ENCODE measurements at regions of chr2 and their contacts with region 1.

Region 1: DNA sequence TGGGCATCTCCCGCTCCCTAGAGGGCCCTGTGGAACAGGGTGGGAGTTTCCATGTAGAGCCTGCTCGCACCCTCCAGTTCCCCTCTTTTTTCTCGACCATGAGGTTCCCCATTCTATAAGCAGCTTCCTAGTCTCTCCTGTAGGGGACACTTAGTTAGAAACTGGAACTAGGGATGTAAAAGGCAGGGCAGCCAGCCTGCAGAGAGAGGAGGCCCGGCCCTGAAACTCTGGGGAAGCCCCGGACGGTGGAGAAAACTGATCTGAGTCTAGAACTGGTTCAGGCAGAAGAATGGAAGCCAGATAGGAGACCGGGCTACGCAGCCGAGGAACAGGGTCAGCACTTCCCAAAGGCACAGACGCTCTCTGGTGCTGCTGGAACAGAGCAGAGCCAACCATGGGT is 51.6 kb upstream of the ATG16L1 start:
- DNase-seq: no peak
- H3K4me3 Mint-ChIP-seq: no peak overlapping the region
- H3K27ac Mint-ChIP-seq: no peak overlapping the region
- H3K4me1 Mint-ChIP-seq: no peaks in the 10 kb centered on the region
- H3K27me3 Mint-ChIP-seq: no peaks in the 10 kb centered on the region
- CTCF ChIP-seq: no peak

Region 2: GRCh38 chr2:233051241-233052149 is 148.4 kb before region 1 on chr2:
- CTCF ChIA-PET with region 1: no interaction called
- POLR2A ChIA-PET with region 1: no interaction called
- intact Hi-C with region 1: no loop called
- DNase-seq: peak; percentile 98
- H3K4me3 Mint-ChIP-seq: peak overlapping the region; percentile 52
- H3K27ac Mint-ChIP-seq: peak overlapping the region; percentile 94
- H3K4me1 Mint-ChIP-seq: peaks cover 48% of the 10 kb centered on the region
- H3K27me3 Mint-ChIP-seq: no peaks in the 10 kb centered on the region
- CTCF ChIP-seq: no peak

Region 3: DNA sequence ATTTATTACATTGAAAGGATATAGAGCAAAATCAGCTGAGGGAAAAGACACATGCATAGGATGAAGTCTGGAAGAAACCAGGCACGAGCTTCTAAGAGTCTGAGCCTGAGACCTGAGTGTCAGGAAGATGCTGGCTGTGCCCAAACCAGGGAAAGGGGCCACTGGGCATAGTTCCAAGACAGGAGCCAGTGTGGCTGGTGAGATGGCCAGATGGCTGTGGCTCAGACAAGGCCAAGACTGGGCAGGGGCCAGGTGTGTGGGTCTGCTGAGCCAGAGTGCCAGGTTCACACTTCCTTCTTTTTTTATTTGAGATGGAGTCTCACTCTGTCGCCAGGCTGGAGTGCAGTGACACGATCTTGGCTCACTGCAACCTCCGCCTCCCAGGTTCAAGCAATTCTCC is 43.9 kb before region 1 on chr2:
- CTCF ChIA-PET with region 1: no interaction called
- POLR2A ChIA-PET with region 1: no interaction called
- intact Hi-C with region 1: no loop called
- DNase-seq: no peak
- H3K4me3 Mint-ChIP-seq: no peak overlapping the region
- H3K27ac Mint-ChIP-seq: no peak overlapping the region
- H3K4me1 Mint-ChIP-seq: no peaks in the 10 kb centered on the region
- H3K27me3 Mint-ChIP-seq: no peaks in the 10 kb centered on the region
- CTCF ChIP-seq: no peak

Region 4: DNA sequence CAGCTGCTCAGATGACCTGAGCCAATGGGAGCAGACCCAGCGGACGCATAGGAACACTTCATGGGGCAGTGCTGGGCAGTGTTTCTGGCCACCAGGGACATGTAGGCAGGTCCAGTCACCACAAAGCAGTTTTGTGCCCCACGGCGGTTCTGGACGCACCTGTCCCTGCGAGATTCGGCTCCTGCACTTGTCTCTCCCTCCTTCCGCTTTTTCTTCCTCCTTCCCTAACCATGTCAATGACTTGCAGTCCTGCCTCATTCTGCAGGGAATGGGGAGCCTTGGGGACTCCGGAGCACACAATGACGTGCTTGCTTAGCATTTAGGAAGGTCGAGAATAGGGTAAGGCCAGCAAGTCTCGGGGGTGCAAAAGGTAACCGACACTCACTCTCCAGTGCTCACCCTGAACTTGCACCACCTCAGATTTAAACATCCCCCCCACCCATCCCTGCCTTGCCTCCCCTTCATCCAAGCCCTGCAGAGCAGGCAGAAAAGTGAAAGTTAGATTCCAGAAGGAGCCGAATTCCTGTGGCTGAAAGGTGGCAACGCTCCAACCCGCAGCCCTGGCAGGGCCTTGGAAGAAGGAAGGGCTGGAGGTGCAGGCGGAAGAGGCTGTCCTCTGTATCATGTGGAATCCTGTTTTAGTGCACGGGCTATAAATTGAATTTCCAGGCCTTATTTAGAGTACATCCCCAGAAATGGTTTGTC is 11.1 kb after region 1 on chr2:
- CTCF ChIA-PET with region 1: interaction called, 3 read pairs
- POLR2A ChIA-PET with region 1: interaction called, 14 read pairs
- intact Hi-C with region 1: no loop called
- DNase-seq: peak; percentile 93
- H3K4me3 Mint-ChIP-seq: peak overlapping the region; percentile 57
- H3K27ac Mint-ChIP-seq: no peak overlapping the region
- H3K4me1 Mint-ChIP-seq: peaks cover 40% of the 10 kb centered on the region
- H3K27me3 Mint-ChIP-seq: no peaks in the 10 kb centered on the region
- CTCF ChIP-seq: no peak

Region 5: GRCh38 chr2:233443468-233444183 is 243.8 kb after region 1 on chr2:
- CTCF ChIA-PET with region 1: no interaction called
- POLR2A ChIA-PET with region 1: no interaction called
- intact Hi-C with region 1: no loop called
- DNase-seq: peak; percentile 85
- H3K4me3 Mint-ChIP-seq: no peak overlapping the region
- H3K27ac Mint-ChIP-seq: peak overlapping the region; percentile 33
- H3K4me1 Mint-ChIP-seq: peaks cover 5% of the 10 kb centered on the region
- H3K27me3 Mint-ChIP-seq: no peaks in the 10 kb centered on the region
- CTCF ChIP-seq: peak; percentile 77

Measured in MCF 10A (cell line).